IMR-90 (cell line): ENCODE measurements at regions of chr7 and their contacts with region 1.

Region 1: DNA sequence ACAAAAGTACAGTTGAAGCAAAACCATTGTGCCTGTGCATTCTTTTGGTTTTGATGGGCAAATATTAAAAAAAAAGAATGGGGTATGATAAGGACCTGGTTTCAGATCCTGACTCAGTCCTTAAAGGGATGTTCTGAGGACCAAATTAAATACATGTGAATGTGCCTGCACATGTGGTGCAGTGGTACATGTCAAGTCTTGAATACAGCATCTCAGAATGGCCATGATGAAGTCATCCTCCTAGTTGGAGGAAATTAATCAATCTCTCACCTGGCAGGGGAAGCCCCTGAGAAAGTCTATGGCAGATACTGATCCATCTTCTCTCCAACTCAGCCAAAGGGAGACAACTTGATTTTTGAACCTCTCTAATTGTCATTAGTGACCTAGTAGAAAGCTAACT is 207.0 kb downstream of the SUGCT start:
- DNase-seq: no peak
- ATAC-seq: no peak
- H3K4me3 ChIP-seq: no peak overlapping the region
- H3K27ac ChIP-seq: no peak overlapping the region
- H3K4me1 ChIP-seq: no peaks in the 10 kb centered on the region
- H3K27me3 ChIP-seq: no peaks in the 10 kb centered on the region
- CTCF ChIP-seq: no peak
- POLR2A ChIP-seq: no peak
- RAD21 ChIP-seq: no peak

Region 2: DNA sequence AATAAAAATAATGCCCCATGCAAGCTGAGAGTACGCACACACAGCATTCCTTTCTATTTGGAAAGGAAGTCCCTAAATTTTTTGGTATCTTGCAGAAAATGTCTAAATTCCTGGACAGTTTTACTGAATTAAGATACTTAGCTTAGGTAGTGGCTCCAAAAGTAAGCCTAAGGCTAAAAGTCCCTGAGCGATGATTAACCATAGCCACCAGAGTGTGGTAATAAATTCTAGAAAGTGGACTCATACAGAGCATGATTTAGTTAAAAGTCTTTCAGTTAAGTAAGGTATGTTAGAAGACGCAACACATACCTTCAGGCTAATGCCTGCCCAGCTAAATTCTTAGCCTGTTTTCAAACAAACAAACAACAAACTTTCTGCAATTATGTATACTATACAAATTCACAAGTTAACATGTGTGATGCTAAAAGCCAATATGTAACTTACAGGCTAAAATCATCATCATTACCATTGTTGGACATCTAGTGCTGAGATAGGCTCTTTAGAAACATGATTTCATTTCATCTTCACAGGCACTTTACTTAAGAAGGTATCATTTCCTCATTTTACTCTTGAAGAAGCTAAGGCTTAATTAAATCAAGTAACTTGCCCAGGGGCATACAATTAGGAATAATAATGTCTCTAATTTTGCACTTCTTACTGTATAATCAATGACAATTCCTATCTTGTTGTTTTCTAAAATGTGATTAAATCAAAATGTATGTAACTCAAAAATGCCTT is 1037.0 kb before region 1 on chr7:
- CTCF ChIA-PET with region 1: no interaction called
- POLR2A ChIA-PET with region 1: no interaction called
- dilution Hi-C with region 1: no loop called
- in situ Hi-C with region 1: no loop called
- intact Hi-C with region 1: no loop called
- DNase-seq: no peak
- ATAC-seq: no peak
- H3K4me3 ChIP-seq: no peak overlapping the region
- H3K27ac ChIP-seq: no peak overlapping the region
- H3K4me1 ChIP-seq: no peaks in the 10 kb centered on the region
- H3K27me3 ChIP-seq: no peaks in the 10 kb centered on the region
- CTCF ChIP-seq: no peak
- POLR2A ChIP-seq: no peak
- RAD21 ChIP-seq: no peak

Region 3: GRCh38 chr7:39880556-39880955 is 461.3 kb before region 1 on chr7:
- CTCF ChIA-PET with region 1: no interaction called
- POLR2A ChIA-PET with region 1: no interaction called
- dilution Hi-C with region 1: no loop called
- in situ Hi-C with region 1: no loop called
- intact Hi-C with region 1: no loop called
- DNase-seq: peak; percentile 31
- ATAC-seq: peak; percentile 57
- H3K4me3 ChIP-seq: no peak overlapping the region
- H3K27ac ChIP-seq: no peak overlapping the region
- H3K4me1 ChIP-seq: no peaks in the 10 kb centered on the region
- H3K27me3 ChIP-seq: no peaks in the 10 kb centered on the region; the same call in 1 of the 2 replicates
- CTCF ChIP-seq: no peak
- POLR2A ChIP-seq: no peak
- RAD21 ChIP-seq: no peak

Region 4: GRCh38 chr7:40047661-40048060 is 294.2 kb before region 1 on chr7:
- CTCF ChIA-PET with region 1: no interaction called
- POLR2A ChIA-PET with region 1: no interaction called
- dilution Hi-C with region 1: no loop called
- in situ Hi-C with region 1: no loop called
- intact Hi-C with region 1: no loop called
- DNase-seq: no peak
- ATAC-seq: no peak
- H3K4me3 ChIP-seq: no peak overlapping the region
- H3K27ac ChIP-seq: no peak overlapping the region
- H3K4me1 ChIP-seq: no peaks in the 10 kb centered on the region
- H3K27me3 ChIP-seq: no peaks in the 10 kb centered on the region
- CTCF ChIP-seq: peak; percentile 8; the same call in 1 of the 2 replicates
- POLR2A ChIP-seq: no peak
- RAD21 ChIP-seq: no peak

Region 5: GRCh38 chr7:40369641-40370277 is 27.9 kb after region 1 on chr7:
- CTCF ChIA-PET with region 1: no interaction called
- POLR2A ChIA-PET with region 1: no interaction called
- dilution Hi-C with region 1: no loop called
- in situ Hi-C with region 1: no loop called
- intact Hi-C with region 1: no loop called
- DNase-seq: no peak
- ATAC-seq: no peak
- H3K4me3 ChIP-seq: no peak overlapping the region
- H3K27ac ChIP-seq: no peak overlapping the region
- H3K4me1 ChIP-seq: no peaks in the 10 kb centered on the region
- H3K27me3 ChIP-seq: no peaks in the 10 kb centered on the region
- CTCF ChIP-seq: no peak
- POLR2A ChIP-seq: no peak
- RAD21 ChIP-seq: no peak

Region 6: GRCh38 chr7:40604601-40605438 is 263.0 kb after region 1 on chr7:
- CTCF ChIA-PET with region 1: no interaction called
- POLR2A ChIA-PET with region 1: no interaction called
- dilution Hi-C with region 1: no loop called
- in situ Hi-C with region 1: loop called (anchors 5 kb)
- intact Hi-C with region 1: no loop called
- DNase-seq: peak; percentile 52
- ATAC-seq: peak; percentile 96
- H3K4me3 ChIP-seq: no peak overlapping the region
- H3K27ac ChIP-seq: no peak overlapping the region
- H3K4me1 ChIP-seq: peaks cover 2% of the 10 kb centered on the region; the same call in 1 of the 2 replicates
- H3K27me3 ChIP-seq: no peaks in the 10 kb centered on the region
- CTCF ChIP-seq: peak; percentile 78
- POLR2A ChIP-seq: no peak
- RAD21 ChIP-seq: peak; percentile 83